Activated CD8-positive, alpha-beta memory T cell treated with anti-CD3 and anti-CD28 coated beads, Interleukin-2, amount 10 ng/mL, durations not matched to agents 7 days and 5 days (primary cell): ENCODE measurements at regions of chr5 and their contacts with region 1.

Region 1: DNA sequence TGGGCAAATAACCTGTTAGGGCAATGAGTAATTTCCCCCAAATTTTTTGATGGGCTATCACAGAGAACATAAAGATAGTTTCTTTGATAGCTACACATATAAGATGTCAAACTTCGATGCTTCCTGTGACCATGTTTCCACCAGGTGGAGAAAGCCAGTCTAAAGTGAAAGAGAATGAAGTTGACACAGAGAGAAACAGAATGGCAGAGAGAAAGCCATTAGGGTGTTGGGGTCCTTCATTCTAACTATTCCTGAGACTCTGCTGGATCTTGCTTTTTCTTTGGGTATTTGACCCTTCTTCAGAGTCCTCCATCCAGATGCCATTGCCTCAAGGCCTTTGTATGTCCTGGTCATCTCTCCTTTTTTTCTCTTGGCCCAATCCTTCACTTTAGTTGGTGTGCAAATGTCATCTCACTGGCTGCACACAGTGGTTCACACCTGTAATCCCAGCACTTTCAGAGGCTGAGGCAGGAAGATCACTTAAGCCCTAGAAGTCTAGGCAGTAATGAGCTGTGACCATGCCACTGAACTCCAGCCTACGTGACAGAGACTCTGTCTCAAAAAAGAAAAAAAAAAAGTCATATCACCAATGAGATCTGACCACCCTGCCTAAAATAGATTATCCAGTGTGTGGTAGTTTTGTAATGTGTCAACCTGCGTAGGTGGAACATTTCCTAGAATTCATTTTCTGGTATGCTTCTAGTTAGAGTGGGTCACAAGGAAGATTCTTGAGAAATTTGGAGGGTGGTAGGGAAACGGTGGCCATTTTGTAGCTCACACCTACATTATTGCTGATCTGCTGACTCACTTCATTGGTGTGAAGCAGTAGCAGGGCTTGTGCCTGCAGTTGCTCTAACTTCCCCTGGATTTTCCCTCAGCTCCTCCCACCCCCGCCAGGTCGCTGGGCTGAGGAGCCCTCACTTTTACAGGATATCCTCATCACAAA is 20.8 kb upstream of the KIF2A start:
- DNase-seq: peak; percentile 88
- ATAC-seq: peak; percentile 91
- H3K4me3 Mint-ChIP-seq: peak overlapping the region; percentile 18
- H3K27ac Mint-ChIP-seq: peak overlapping the region; percentile 99
- H3K4me1 Mint-ChIP-seq: peaks cover 72% of the 10 kb centered on the region
- H3K27me3 Mint-ChIP-seq: no peaks in the 10 kb centered on the region

Region 2: GRCh38 chr5:62297026-62297425 is 11.8 kb after region 1 on chr5:
- CTCF ChIA-PET with region 1: interaction called, 13 read pairs
- DNase-seq: peak; percentile 67
- ATAC-seq: peak; percentile 77
- H3K4me3 Mint-ChIP-seq: peak overlapping the region; percentile 25
- H3K27ac Mint-ChIP-seq: peak overlapping the region; percentile 71
- H3K4me1 Mint-ChIP-seq: peaks cover 58% of the 10 kb centered on the region
- H3K27me3 Mint-ChIP-seq: no peaks in the 10 kb centered on the region

Region 3: DNA sequence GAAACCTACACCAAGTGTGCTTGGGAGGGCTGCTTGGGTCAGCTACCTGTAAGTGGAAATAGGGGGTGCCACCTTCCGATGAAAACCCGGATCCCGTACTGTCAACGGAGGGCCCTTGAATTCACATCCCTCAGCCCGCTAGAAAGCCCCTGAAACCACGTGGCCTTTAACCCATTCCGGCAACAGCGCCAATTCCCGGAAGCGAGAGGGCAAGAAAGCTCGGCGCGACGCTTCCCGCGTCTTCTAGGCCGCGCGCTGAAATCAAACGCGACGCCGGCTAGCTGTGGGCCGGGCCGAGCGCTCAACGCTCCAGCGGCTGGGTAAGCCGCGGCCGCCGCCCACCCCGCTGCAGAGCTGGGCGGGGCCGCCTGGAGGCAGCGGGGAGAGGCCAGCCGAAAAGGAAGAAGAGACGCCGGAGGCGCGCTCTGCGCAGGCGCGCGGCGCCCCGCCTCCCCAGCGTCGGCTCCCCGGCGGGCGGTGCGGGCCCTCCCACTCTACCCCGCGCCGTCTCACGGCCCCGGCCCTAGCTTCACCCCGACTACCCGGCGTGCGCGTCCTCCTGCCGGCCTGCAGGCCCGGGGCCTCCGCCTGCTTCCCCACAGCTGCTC is 20.6 kb after region 1 on chr5 and contains the start of gene KIF2A:
- CTCF ChIA-PET with region 1: interaction called, 13 read pairs
- DNase-seq: peak; percentile 97
- ATAC-seq: peak; percentile 89
- H3K4me3 Mint-ChIP-seq: peak within 1 kb of the TSS; percentile 99
- H3K27ac Mint-ChIP-seq: peak within 1 kb of the TSS; percentile 98
- H3K4me1 Mint-ChIP-seq: peaks cover 52% of the 10 kb centered on the region
- H3K27me3 Mint-ChIP-seq: no peaks in the 10 kb centered on the region
- total RNA-seq, gene KIF2A: 194 to 225 TPM